PC-3 (cell line): ENCODE measurements at regions of chr6 and their contacts with region 1.

Region 1: GRCh38 chr6:79869600-79870084 is 77.7 kb downstream of the ELOVL4 start:
- DNase-seq: peak; percentile 71
- ATAC-seq: peak; percentile 98
- H3K4me3 ChIP-seq: peak overlapping the region; percentile 39; the same call in 1 of the 2 replicates
- H3K27ac ChIP-seq: no peak overlapping the region
- H3K4me1 ChIP-seq: 0 out of 2 replicates have a peak, but pooled peaks cover 6% of the 10 kb centered on the region
- H3K27me3 ChIP-seq: no peaks in the 10 kb centered on the region
- CTCF ChIP-seq: peak; percentile 75

Region 2: DNA sequence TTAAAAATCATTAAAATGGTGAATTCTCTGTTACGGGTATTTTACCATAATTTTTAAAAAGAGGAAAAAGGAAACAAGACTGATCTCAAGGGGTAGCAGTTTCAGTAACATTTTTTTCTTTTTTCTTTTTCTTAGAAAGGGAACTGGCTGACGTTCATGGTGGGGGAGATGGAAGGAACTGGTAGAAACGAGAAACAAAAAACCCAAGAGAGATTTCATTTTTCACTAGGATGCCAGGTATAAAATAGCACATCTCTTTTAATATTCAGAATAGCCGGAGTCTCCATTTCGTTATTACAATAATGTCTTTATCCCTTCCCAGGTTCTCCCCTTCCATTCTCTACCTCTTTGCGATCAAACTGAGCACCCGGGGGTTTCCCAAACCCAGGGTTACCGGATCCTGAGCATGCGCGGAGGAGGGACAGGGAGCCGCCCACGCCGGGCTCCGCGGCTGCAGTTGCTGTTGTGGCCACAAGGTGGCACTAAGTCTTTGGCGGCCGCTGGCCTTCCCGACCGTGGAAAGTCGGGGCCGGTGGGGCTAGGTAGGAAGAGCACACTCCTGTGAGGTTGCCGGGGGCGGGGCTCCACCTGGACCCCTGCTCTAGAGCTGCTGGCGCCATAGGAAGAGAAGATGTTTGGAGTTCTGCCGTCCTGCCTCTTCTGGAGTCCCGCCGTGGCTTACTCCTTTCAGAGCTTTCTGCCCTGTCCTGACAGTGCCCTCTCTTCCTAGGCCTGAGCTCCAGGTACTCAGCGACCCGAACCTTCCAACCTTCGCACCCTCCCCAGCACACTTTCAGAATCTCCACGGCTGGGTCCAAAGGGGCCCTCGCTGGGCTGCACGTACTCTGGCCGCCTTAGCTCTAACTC is 91.7 kb before region 1 on chr6:
- CTCF ChIA-PET with region 1: interaction called, 5 read pairs
- POLR2A ChIA-PET with region 1: no interaction called
- intact Hi-C with region 1: loop called (anchors 1 kb)
- DNase-seq: peak; percentile 74
- ATAC-seq: peak; percentile 94
- H3K4me3 ChIP-seq: peak overlapping the region; percentile 56
- H3K27ac ChIP-seq: no peak overlapping the region
- H3K4me1 ChIP-seq: no peaks in the 10 kb centered on the region
- H3K27me3 ChIP-seq: no peaks in the 10 kb centered on the region
- CTCF ChIP-seq: peak; percentile 87

Region 3: GRCh38 chr6:79928478-79928998 is 58.9 kb after region 1 on chr6:
- CTCF ChIA-PET with region 1: no interaction called
- POLR2A ChIA-PET with region 1: no interaction called
- intact Hi-C with region 1: no loop called
- DNase-seq: no peak
- ATAC-seq: no peak
- H3K4me3 ChIP-seq: no peak overlapping the region
- H3K27ac ChIP-seq: no peak overlapping the region
- H3K4me1 ChIP-seq: no peaks in the 10 kb centered on the region
- H3K27me3 ChIP-seq: no peaks in the 10 kb centered on the region
- CTCF ChIP-seq: no peak

Region 4: DNA sequence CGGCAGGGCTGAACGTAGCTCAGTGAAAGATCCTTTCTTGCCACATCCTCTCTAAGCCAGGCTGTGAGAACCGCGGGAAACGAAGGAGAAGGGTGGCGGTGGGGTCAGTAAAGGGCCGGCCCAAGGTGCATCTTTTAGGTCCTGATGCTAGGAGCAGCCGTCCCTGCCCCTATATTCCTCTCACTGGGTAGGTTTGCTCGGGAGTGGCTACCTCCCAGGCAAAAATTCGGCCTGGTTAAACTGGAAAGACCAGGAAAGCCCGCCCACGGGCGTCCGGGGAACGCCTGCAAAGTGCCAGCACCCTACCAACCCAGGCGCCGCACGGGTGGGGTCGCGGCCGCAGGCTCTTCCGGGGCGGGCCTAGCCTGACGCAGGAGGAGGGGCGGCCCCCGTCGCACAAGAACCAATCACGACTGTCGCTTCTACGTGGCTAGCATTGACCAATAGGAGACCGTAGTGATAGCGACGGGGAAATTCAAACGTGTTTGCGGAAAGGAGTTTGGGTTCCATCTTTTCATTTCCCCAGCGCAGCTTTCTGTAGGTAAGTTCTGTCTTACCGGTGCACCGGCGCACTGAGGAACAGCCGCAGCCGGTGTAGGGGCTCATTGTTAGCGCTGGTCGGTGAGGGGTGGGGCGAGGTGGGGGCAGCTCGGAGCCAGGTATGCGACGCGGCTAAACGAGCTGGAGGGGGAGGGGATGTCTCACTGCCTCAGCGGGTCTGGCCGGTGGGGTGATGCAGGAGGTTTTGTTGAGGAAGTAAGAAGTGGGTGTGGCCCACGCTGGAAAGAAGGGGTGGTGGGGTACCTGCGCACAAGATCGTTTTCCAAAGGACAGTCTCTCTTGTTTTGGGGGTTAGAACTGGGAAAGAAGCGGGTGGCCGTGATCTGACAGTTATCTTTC is 134.8 kb after region 1 on chr6 and contains the start of gene TTK:
- CTCF ChIA-PET with region 1: no interaction called
- POLR2A ChIA-PET with region 1: no interaction called
- intact Hi-C with region 1: loop called (anchors 10 kb)
- DNase-seq: peak; percentile 91
- ATAC-seq: peak; percentile 95
- H3K4me3 ChIP-seq: peak within 1 kb of the TSS; percentile 90
- H3K27ac ChIP-seq: peak within 1 kb of the TSS; percentile 51
- H3K4me1 ChIP-seq: peaks cover 19% of the 10 kb centered on the region
- H3K27me3 ChIP-seq: no peaks in the 10 kb centered on the region
- CTCF ChIP-seq: no peak
- total RNA-seq, gene TTK: 38.9 and 39.0 TPM in 2 replicates

Region 5: DNA sequence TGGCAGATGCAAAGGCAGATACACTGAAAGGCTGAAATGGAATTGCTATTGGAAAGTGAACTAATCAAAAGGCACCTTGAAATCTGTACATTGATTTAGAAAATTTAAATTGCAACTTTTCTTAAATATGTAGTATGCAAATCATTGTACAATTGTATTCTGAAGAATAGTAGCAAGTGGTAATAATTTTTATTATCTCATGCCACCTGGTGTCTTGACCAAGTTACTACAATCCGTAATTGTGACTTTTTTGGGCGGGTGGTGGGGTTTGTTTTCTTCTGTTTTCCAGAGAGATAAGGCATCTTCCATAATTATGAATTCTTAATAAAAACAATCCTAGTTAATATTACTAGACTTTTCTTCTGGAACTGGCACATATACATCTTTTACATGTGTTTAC is 224.4 kb after region 1 on chr6:
- CTCF ChIA-PET with region 1: interaction called, 4 read pairs
- POLR2A ChIA-PET with region 1: no interaction called
- intact Hi-C with region 1: loop called (anchors 10 kb)
- DNase-seq: peak; percentile 49
- ATAC-seq: no peak; the same call in 1 of the 2 replicates
- H3K4me3 ChIP-seq: no peak overlapping the region
- H3K27ac ChIP-seq: no peak overlapping the region
- H3K4me1 ChIP-seq: no peaks in the 10 kb centered on the region
- H3K27me3 ChIP-seq: no peaks in the 10 kb centered on the region
- CTCF ChIP-seq: peak; percentile 62